ENCODE measurements at regions of chr1 and their contacts with region 1.

Region 1: GRCh38 chr1:64864018-64864940 is 102.1 kb downstream of the JAK1 start:
- DNase-seq: peak; percentile 92
- ATAC-seq: peak; percentile 99
- H3K4me3 ChIP-seq: no peak overlapping the region
- H3K27ac ChIP-seq: peak overlapping the region; percentile 38
- H3K4me1 ChIP-seq: peaks cover 30% of the 10 kb centered on the region
- H3K27me3 ChIP-seq: no peaks in the 10 kb centered on the region
- CTCF ChIP-seq: no peak
- EP300 ChIP-seq: peak; percentile 84 to 87
- POLR2A ChIP-seq: 0 out of 2 replicates have a peak, but pooled peaks have one; percentile 34
- RAD21 ChIP-seq: peak; percentile 35

Region 2: DNA sequence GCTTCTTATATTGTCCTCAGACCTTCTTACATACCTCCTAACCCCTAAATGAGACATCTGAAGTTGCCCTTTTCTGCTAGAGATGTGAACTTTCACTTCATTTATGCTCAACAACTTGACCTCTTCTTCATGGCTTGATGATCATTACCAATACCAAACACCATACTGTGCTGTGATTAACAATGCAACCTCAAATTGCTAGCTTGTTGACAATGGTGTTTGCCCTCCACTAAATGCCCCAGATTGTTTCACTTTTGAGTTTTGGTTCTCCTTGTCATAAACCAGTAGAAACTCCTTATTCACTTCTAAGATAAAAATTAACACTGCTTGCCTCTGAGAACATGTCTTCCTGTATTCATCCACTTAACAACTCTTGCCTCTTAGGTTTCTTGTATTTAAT is 96.5 kb after region 1 on chr1:
- CTCF ChIA-PET with region 1: no interaction called
- POLR2A ChIA-PET with region 1: interaction called, 3 read pairs
- RAD21 ChIA-PET with region 1: interaction called, 8 read pairs
- SMC1A ChIA-PET with region 1: interaction called, 7 read pairs
- in situ Hi-C with region 1: no loop called
- intact Hi-C with region 1: loop called (anchors 1 kb)
- DNase-seq: peak; percentile 85
- ATAC-seq: peak; percentile 79
- H3K4me3 ChIP-seq: peak overlapping the region; percentile 41
- H3K27ac ChIP-seq: peak overlapping the region; percentile 43
- H3K4me1 ChIP-seq: peaks cover 54% of the 10 kb centered on the region
- H3K27me3 ChIP-seq: no peaks in the 10 kb centered on the region
- CTCF ChIP-seq: no peak
- EP300 ChIP-seq: peak in 1 of 2 experiments; percentile 59; a peak in 1 of 4 replicates
- POLR2A ChIP-seq: no peak
- RAD21 ChIP-seq: no peak

Region 3: GRCh38 chr1:64966158-64966971 is 102.1 kb after region 1 on chr1 and contains the start of gene JAK1:
- CTCF ChIA-PET with region 1: no interaction called
- POLR2A ChIA-PET with region 1: interaction called, 3 read pairs
- RAD21 ChIA-PET with region 1: interaction called, 5 read pairs
- SMC1A ChIA-PET with region 1: interaction called, 3 read pairs
- in situ Hi-C with region 1: no loop called
- intact Hi-C with region 1: loop called (anchors 2 kb)
- DNase-seq: no peak
- ATAC-seq: peak; percentile 80
- H3K4me3 ChIP-seq: peak within 1 kb of the TSS; percentile 98
- H3K27ac ChIP-seq: peak within 1 kb of the TSS; percentile 86
- H3K4me1 ChIP-seq: peaks cover 28% of the 10 kb centered on the region
- H3K27me3 ChIP-seq: no peaks in the 10 kb centered on the region
- CTCF ChIP-seq: no peak
- EP300 ChIP-seq: 0 out of 4 replicates have a peak, but pooled peaks of 1 of the 2 experiments have one; percentile 15
- POLR2A ChIP-seq: peak; percentile 83
- RAD21 ChIP-seq: no peak
- polyA plus RNA-seq, gene JAK1: 9.6 to 11.5 TPM

Region 4: DNA sequence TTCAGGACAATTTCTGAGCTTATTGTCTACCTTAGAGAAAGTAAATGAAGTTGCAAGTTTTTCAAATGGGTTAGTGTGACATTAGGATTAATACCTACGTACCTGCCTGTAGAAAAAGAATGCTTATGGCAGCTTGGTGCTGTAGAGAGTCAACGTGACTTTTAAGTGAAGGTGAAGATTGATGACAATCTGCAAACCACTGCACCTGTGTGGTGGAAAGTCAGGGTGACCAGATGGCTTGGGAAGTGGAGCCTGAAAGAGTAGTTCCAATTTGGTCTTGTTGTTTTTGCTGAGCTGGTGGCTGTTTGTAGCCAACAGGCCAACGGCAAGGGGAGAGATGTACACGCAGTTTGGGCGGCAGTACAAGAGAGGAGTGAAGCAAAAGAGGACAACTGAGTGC is 180.1 kb after region 1 on chr1:
- CTCF ChIA-PET with region 1: no interaction called
- POLR2A ChIA-PET with region 1: no interaction called
- RAD21 ChIA-PET with region 1: no interaction called
- SMC1A ChIA-PET with region 1: interaction called, 4 read pairs
- in situ Hi-C with region 1: no loop called
- intact Hi-C with region 1: loop called (anchors 5 kb)
- DNase-seq: no peak
- ATAC-seq: no peak
- H3K4me3 ChIP-seq: no peak overlapping the region
- H3K27ac ChIP-seq: no peak overlapping the region
- H3K4me1 ChIP-seq: no peaks in the 10 kb centered on the region; the same call in 1 of the 2 replicates
- H3K27me3 ChIP-seq: peaks cover 0 to 5% of the 10 kb centered on the region in 2 experiments; a peak in 2 of 4 replicates
- CTCF ChIP-seq: no peak
- EP300 ChIP-seq: no peak
- POLR2A ChIP-seq: no peak
- RAD21 ChIP-seq: no peak